ENCODE measurements at regions of chr2 and their contacts with region 1.

Region 1: GRCh38 chr2:99819766-99820165 is 322.6 kb downstream of the AFF3 start:
- DNase-seq: no peak
- ATAC-seq: no peak
- H3K4me3 ChIP-seq: no peak overlapping the region
- H3K27ac ChIP-seq: no peak overlapping the region
- H3K4me1 ChIP-seq: no peaks in the 10 kb centered on the region
- H3K27me3 ChIP-seq: peaks cover 0 to 1% (median 0%) of the 10 kb centered on the region in 3 donors
- CTCF ChIP-seq: no peak

Region 2: DNA sequence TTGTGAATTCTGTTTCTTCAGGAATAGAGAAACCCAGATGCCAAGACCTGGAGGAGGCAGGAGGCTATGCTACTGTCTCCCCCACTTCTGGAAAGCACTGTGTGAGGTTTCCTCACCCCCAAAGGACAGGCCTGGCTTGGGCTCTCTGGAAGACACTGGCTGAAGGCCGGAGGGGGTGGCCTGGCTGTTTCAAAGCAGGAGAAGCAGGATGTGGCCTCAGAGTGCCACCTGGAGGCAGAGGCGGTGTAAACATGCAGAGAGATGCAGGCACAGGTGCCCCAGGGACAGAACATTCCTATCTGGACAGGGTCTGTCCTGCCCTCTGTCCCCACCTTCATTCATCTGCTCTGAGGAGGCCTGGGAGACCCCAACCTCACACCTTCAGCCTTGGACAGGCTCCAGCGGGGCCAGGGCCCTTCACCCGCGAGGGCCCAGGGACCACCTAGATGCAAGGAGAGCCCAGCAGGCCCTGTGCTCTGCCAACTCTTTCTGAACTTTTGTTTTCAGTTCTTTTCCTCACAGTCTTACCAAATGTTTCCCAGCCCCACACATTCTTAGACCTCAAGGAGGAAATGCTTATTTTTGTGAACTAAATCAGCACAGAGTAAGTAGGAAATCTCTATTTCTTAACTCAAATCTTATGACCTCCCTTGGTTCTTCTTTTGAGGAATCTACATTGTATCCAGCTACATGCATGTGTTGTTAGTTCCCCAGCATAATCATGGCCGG is 423.3 kb after region 1 on chr2:
- intact Hi-C with region 1: loop called in 1 of 2 experiments (anchors 5 kb)
- DNase-seq: peak; percentile 59 to 78
- ATAC-seq: peak; percentile 81 to 93 (median 82)
- H3K4me3 ChIP-seq: no peak overlapping the region
- H3K27ac ChIP-seq: no peak overlapping the region
- H3K4me1 ChIP-seq: peaks cover 3% of the 10 kb centered on the region
- H3K27me3 ChIP-seq: no peaks in the 10 kb centered on the region
- CTCF ChIP-seq: peak; percentile 79